GM13977 (cell line): ENCODE measurements at regions of chr16 and their contacts with region 1.

Region 1: GRCh38 chr16:20409398-20410120 is at the start of gene ACSM5:
- DNase-seq: no peak
- CTCF ChIP-seq: no peak

Region 2: GRCh38 chr16:19666477-19666876 is 743.1 kb before region 1 on chr16:
- in situ Hi-C with region 1: no loop called
- DNase-seq: no peak
- CTCF ChIP-seq: no peak

Region 3: GRCh38 chr16:20704281-20704680 is 294.7 kb after region 1 on chr16:
- in situ Hi-C with region 1: loop called (anchors 25 kb)
- DNase-seq: no peak
- CTCF ChIP-seq: no peak